HEK293 (cell line): ENCODE measurements at regions of chrX and their contacts with region 1.

Region 1: GRCh38 chrX:107985032-107985431 is 2.9 kb upstream of the TEX13B start:
- H3K4me3 ChIP-seq: no peak overlapping the region
- H3K27ac ChIP-seq: no peak overlapping the region
- H3K4me1 ChIP-seq: no peaks in the 10 kb centered on the region
- CTCF ChIP-seq: no peak

Region 2: GRCh38 chrX:107747596-107748161 is 237.4 kb before region 1 on chrX:
- CTCF ChIA-PET with region 1: no interaction called
- POLR2A ChIA-PET with region 1: no interaction called
- H3K4me3 ChIP-seq: no peak overlapping the region
- H3K27ac ChIP-seq: peak overlapping the region; percentile 29; the same call in 1 of the 2 replicates
- H3K4me1 ChIP-seq: peaks cover 12% of the 10 kb centered on the region
- CTCF ChIP-seq: no peak

Region 3: DNA sequence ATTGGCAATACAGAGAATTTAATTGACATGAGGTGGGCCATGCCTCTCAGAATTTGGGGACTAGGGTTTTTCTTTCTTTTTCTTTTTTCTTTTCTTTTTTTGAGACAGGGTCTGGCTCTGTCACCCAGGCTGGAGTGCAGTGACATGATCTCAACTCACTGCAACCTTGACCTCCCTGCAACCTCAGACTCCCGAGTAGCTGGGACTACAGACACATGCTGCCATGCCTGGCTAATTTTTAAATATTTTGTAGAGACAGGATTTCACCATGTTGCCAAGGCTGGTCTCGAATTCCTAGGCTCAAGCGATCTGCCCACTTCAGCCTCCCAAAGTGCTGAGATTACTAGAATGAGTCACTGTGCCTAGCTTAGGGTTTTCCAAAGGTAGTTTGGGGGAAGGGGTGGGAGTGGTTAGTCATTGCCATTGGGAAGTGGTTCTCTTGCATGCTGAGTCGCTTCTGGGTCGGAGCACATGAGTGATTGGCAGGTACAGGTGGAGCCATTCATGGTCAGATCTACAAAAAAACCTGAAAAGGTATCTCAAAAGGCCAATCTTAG is 104.9 kb before region 1 on chrX:
- CTCF ChIA-PET with region 1: no interaction called
- POLR2A ChIA-PET with region 1: no interaction called
- H3K4me3 ChIP-seq: no peak overlapping the region
- H3K27ac ChIP-seq: no peak overlapping the region
- H3K4me1 ChIP-seq: no peaks in the 10 kb centered on the region
- CTCF ChIP-seq: no peak

Region 4: DNA sequence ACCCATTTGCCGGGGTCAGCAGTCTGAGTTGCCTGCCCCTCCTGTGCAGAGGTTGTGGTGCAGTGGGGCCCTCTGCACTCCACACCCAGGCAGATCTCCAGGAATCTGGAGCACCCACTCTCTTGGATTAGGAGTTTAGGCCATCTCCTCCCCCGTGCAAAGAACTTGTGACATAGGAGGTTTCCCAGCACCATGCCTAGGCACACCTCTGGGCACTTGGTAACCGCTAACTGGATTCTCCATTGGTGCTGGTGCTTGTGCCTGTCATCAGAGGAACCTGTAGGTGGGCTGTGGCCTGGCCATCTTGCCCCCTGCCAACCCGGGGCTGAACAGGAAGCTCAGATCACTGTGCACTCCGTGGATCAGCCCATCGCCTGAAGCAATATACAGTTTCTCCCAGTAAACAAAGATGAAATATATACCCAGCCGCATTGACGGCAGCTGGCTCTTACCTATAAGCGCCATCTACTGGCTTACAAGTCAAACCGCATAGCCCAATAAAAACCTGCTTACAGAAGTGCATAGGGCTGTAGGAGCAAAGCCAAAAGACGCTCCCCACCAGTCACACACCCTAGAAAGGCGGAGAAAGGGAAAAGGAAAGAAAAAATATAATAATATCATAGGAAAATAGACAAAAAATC is 16.3 kb after region 1 on chrX:
- CTCF ChIA-PET with region 1: interaction called, 10 read pairs
- POLR2A ChIA-PET with region 1: no interaction called
- H3K4me3 ChIP-seq: no peak overlapping the region
- H3K27ac ChIP-seq: no peak overlapping the region
- H3K4me1 ChIP-seq: no peaks in the 10 kb centered on the region
- CTCF ChIP-seq: peak; percentile 42; the same call in 1 of the 2 replicates